ENCODE measurements at regions of chr5 and their contacts with region 1.

Region 1: GRCh38 chr5:101679816-101680215 is 616.3 kb downstream of the SLCO4C1 start:
- DNase-seq: no peak
- H3K4me3 ChIP-seq: no peak overlapping the region
- H3K27ac ChIP-seq: no peak overlapping the region
- H3K4me1 ChIP-seq: no peaks in the 10 kb centered on the region
- H3K27me3 ChIP-seq: no peaks in the 10 kb centered on the region
- CTCF ChIP-seq: no peak

Region 2: DNA sequence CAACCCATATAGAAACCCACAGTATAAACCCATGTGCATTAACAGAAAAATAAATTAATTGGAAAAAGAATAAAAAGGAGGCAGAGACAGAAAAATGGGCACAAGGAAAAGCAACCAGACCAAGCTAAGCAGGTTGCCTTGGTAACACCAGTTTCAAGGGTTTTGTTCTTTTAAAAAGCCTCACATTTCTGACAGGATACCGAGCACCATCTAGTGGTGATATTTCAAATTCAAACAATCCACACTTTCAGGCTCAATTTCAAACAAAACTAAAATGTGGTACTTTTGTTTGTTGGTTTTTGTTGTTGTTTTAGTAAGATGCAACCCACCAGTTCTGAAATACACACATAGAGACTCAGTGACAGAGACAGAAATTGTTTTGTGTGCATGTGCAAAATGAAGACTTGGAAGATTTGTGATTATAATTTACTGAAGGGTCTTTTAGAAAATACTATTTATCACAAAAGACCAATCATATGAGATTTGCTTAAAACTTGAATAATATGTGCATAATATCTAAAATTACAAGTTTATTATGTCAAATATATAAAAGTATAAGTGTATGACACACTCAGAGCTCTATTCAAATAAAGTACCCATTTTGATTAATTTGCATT is 298.0 kb after region 1 on chr5:
- intact Hi-C with region 1: loop called (anchors 5 kb)
- DNase-seq: no peak
- H3K4me3 ChIP-seq: no peak overlapping the region
- H3K27ac ChIP-seq: no peak overlapping the region
- H3K4me1 ChIP-seq: no peaks in the 10 kb centered on the region
- H3K27me3 ChIP-seq: no peaks in the 10 kb centered on the region
- CTCF ChIP-seq: peak in 2 of 3 experiments; percentile 58 to 73